Mammary epithelial cell (primary cell): ENCODE measurements at regions of chr1 and their contacts with region 1.

Region 1: GRCh38 chr1:154115180-154115579 is 39.7 kb downstream of the NUP210L start:
- DNase-seq: no peak
- H3K4me3 ChIP-seq: no peak overlapping the region
- H3K27ac ChIP-seq: no peak overlapping the region
- H3K4me1 ChIP-seq: no peaks in the 10 kb centered on the region
- H3K27me3 ChIP-seq: no peaks in the 10 kb centered on the region
- CTCF ChIP-seq: no peak

Region 2: GRCh38 chr1:154062309-154062708 is 52.9 kb before region 1 on chr1:
- CTCF ChIA-PET with region 1: no interaction called
- dilution Hi-C with region 1: loop called (anchors 5 kb)
- in situ Hi-C with region 1: no loop called
- intact Hi-C with region 1: no loop called
- DNase-seq: no peak
- H3K4me3 ChIP-seq: no peak overlapping the region
- H3K27ac ChIP-seq: no peak overlapping the region
- H3K4me1 ChIP-seq: no peaks in the 10 kb centered on the region
- H3K27me3 ChIP-seq: no peaks in the 10 kb centered on the region
- CTCF ChIP-seq: no peak